ENCODE measurements at regions of chr6 and their contacts with region 1.

Region 1: GRCh38 chr6:99119109-99120031 is 171.6 kb upstream of the FBXL4 start:
- ATAC-seq: peak; percentile 50 to 72 (median 62)
- H3K4me3 ChIP-seq: no peak overlapping the region
- H3K27ac ChIP-seq: no peak overlapping the region
- H3K4me1 ChIP-seq: no peaks in the 10 kb centered on the region

Region 2: DNA sequence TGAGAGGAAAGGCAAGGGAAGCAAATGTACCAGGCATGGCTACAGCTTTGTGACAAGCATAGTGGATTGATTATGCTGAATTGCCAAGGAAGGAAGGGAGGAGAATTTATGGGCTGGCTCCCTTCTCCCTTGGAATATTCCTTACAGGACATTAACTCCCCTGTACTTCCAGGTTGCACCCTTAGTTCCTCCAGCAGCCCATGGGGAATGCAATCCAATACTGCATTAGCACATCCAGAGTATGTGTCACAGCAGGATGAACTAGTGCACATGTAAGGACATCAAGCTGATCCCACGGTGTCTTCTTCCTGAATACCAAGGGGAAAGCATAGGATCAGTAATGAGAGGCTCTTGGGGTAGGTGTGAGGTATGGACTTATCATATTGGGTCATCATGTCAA is 675.7 kb before region 1 on chr6:
- in situ Hi-C with region 1: no loop called
- ATAC-seq: peak in 5 of 8 experiments; percentile 36 to 56 (median 47)
- H3K4me3 ChIP-seq: no peak overlapping the region
- H3K27ac ChIP-seq: no peak overlapping the region
- H3K4me1 ChIP-seq: peaks cover 7 to 13% of the 10 kb centered on the region in 2 donors

Region 3: DNA sequence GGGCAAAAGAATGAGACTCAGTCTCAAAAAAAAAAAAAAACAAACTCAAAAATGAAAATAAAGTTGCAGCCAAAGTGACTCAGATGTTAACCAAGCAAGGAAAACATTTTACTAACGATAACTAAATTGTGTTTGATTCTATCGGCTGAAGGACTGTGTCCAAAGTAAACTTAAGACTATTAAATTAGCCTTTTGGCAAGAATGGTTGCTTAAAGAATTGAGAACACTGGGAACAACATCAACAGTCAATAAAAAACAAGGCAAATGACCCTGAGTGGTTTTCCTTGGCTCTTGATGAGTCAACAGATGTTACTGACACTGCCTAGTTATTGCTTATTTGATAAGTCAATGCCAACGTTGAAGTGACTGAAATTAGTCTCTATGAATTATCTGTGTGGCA is 248.3 kb before region 1 on chr6:
- in situ Hi-C with region 1: loop called in 2 of 9 experiments (anchors 25 kb)
- ATAC-seq: no peak
- H3K4me3 ChIP-seq: no peak overlapping the region
- H3K27ac ChIP-seq: no peak overlapping the region
- H3K4me1 ChIP-seq: no peaks in the 10 kb centered on the region

Region 4: DNA sequence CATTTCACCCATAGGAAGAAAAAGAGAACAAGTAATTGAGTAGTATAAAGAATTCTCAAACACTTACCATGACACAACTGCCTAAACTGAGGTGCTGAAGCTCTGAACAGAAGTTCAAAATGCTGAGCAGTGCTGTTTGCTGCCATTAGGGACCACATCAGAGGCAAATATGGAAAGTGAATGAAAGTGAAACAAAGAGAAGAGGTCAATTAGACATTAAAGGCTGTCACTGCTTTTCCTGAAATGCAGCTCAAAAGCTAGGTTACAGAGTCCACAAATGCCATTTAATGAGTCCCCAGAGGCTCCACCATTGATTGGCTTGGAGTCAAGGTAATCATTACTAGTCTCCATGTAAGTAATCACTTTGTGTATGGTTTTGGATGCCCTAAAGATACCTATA is 238.9 kb before region 1 on chr6:
- in situ Hi-C with region 1: loop called in 1 of 9 experiments (anchors 25 kb)
- ATAC-seq: peak in 1 of 8 experiments; percentile 35
- H3K4me3 ChIP-seq: no peak overlapping the region
- H3K27ac ChIP-seq: no peak overlapping the region
- H3K4me1 ChIP-seq: peaks cover 0 to 12% of the 10 kb centered on the region in 2 donors

Region 5: GRCh38 chr6:99446076-99446475 is 326.7 kb after region 1 on chr6:
- in situ Hi-C with region 1: no loop called
- ATAC-seq: no peak
- H3K4me3 ChIP-seq: no peak overlapping the region
- H3K27ac ChIP-seq: no peak overlapping the region
- H3K4me1 ChIP-seq: no peaks in the 10 kb centered on the region